Psoas muscle (tissue), 8 donors: ENCODE measurements at regions of chr7 and their contacts with region 1.

Region 1: GRCh38 chr7:992709-993607 is 10.0 kb downstream of the CYP2W1 start:
- DNase-seq: peak; percentile 98 to 99
- ATAC-seq: peak; percentile 98 to 99 (median 98)
- H3K4me3 ChIP-seq: no peak overlapping the region
- H3K27ac ChIP-seq: no peak overlapping the region
- H3K4me1 ChIP-seq: peaks cover 9% of the 10 kb centered on the region
- H3K27me3 ChIP-seq: peaks cover 0 to 42% (median 17%) of the 10 kb centered on the region in 3 donors
- CTCF ChIP-seq: peak; percentile 99

Region 2: GRCh38 chr7:842431-843031 is 150.4 kb before region 1 on chr7:
- intact Hi-C with region 1: no loop called
- DNase-seq: no peak
- ATAC-seq: no peak
- H3K4me3 ChIP-seq: no peak overlapping the region
- H3K27ac ChIP-seq: no peak overlapping the region
- H3K4me1 ChIP-seq: peaks cover 14% of the 10 kb centered on the region
- H3K27me3 ChIP-seq: no peaks in the 10 kb centered on the region
- CTCF ChIP-seq: no peak

Region 3: DNA sequence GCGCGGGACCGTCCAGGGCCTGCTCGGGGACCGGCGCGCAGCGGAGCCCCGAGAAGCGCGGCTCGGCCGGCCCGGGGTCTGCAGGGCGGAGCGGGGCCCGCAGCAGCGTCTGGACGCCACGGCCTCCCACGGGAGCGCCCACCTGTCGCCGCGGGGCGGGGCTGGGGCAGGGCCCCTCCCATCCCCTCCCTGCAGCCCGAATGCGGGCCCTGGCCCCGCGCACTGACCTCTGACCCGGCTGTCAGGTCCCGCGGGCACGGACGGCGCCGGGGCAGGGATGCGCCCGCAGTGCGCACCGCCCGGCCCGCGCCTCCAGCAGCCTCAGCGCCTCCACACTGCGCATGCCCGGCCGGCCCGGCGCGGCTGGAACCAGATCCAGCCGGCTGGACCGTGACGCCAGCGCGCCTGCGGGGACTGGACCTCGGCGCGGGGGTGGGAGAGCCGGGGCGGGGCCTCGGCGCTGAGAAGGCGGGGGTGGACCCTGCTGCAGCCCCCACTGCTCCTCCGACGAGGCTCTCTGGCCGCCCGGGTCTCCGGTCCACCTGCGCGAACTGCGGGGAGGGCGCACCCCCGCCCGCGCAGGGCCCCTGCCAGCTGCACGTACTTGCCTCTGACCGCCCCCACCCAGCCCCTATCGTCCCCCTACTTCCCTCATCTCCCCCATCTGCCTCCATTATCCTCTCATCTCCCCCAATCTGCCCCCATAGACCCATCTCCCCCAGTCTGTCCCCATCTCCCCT is 35.2 kb after region 1 on chr7:
- intact Hi-C with region 1: loop called in 1 of 2 experiments (anchors 1 kb)
- DNase-seq: peak; percentile 93 to 96
- ATAC-seq: peak; percentile 92 to 95 (median 94)
- H3K4me3 ChIP-seq: peak overlapping the region; percentile 73
- H3K27ac ChIP-seq: peak overlapping the region; percentile 81
- H3K4me1 ChIP-seq: peaks cover 32% of the 10 kb centered on the region
- H3K27me3 ChIP-seq: no peaks in the 10 kb centered on the region
- CTCF ChIP-seq: no peak

Region 4: DNA sequence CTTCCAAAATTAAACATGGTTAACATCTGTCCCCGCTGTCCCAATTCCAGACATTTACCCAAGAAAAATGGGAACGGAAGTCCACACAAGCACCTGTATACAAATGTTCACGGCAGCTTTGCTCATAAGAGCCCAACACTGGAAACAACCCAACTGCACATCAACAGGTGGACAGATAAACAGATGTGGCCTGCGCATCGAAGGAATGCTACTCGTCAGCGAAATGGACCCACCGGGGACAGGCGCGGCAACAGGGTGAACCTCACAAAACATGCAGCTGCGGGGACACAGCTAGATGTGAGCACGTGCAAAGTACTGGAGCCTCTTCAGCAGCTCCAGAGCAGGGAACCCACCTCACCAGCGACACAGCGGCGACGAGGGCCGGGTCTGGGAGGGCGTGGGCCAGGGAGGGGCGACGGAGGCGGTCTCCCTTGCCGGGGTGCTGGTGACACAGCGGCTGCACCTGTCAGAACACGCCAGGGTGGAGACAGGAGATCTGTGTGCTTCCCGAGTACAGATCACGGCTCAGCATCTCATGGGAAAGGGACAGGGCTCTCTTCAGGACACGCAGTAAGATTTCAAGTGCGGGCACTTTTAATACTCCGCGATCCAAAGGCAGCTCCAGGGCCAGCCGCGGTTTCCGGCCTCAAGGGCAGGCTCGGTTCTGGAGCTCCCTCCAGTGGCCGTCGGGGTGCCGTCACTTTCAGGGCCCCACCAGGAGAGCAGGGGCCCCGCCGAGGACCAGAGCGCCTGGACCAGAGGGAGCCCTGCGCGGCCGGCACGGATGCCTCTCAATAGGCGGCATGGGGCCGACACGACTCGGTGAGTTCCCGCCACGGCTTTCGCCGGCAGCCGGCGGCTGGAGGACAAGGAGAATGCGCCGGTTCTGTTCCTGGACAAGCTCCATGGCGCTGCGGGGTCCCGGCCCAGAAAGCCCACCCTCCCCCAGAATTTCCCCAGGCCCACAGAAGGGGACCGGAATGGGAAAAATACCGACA is 72.6 kb after region 1 on chr7:
- intact Hi-C with region 1: loop called (anchors 1 kb)
- DNase-seq: peak; percentile 86 to 92
- ATAC-seq: peak; percentile 96 to 100 (median 98)
- H3K4me3 ChIP-seq: peak overlapping the region; percentile 39
- H3K27ac ChIP-seq: no peak overlapping the region
- H3K4me1 ChIP-seq: peaks cover 7% of the 10 kb centered on the region
- H3K27me3 ChIP-seq: no peaks in the 10 kb centered on the region
- CTCF ChIP-seq: peak; percentile 83

Region 5: GRCh38 chr7:1175967-1176851 is 183.3 kb after region 1 on chr7:
- intact Hi-C with region 1: loop called (anchors 2 to 10 kb)
- DNase-seq: peak; percentile 81 to 90
- ATAC-seq: peak; percentile 83 to 96 (median 89)
- H3K4me3 ChIP-seq: peak overlapping the region; percentile 53
- H3K27ac ChIP-seq: no peak overlapping the region
- H3K4me1 ChIP-seq: no peaks in the 10 kb centered on the region
- H3K27me3 ChIP-seq: peaks cover 0 to 17% (median 2%) of the 10 kb centered on the region in 3 donors
- CTCF ChIP-seq: peak; percentile 89